ENCODE measurements at regions of chr1 and their contacts with region 1.

Region 1: DNA sequence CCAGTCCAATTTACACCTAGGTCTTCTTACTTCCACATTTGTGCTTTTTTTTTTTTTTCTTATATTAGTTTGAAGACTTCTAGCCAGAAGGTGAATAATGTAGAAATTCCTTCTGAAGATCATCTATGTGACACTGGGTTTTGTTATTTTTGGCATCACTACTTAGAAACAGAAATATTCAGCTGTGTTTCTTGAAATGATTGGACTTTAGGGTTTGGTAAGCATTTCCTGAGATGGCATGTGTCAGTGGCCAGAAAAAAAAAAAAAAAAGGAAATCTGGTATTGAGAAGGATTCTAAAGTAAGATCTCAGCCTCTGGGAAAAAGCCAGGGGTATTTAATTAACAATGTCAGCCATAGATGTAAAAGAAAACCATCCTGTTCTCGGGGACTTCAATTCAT is 43.4 kb upstream of the LRRC8C start:
- DNase-seq: no peak
- CTCF ChIP-seq: no peak

Region 2: DNA sequence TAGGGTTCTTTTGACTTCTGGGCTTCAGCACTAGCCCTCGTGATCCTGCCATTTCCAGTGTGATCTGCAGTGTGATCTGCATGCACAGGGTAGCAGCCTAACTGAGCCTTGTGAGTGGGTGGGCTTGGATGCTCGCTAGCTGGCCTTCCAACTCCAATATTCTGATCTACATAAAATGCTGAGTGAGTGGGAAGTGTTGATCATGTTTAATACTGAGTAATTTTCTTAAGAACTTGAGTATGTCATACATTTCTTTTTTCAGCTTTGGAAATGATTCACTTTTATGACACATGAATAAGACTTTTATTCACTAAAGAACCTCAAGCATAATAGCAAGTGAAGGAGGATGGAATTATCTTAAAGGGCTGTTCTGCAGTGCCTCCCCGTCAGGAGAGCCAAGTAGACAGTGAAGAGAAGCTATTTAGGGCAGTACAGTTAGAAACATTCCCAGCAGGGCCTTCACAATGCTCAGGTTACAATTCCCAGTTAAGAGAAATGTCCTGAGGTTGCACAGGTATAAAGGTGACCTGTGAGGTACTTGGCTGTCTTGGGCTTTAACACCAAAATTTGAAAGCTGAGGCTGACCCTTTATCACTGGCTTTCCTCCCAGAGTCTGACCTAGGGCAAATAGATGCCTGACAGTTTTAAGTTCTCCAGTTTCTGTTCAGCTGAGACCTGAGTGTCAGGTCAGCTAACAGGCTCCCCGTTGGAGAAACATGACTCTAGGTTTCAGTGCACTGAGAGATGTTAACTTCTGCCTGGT is 14.3 kb after region 1 on chr1:
- CTCF ChIA-PET with region 1: interaction called, 52 read pairs
- POLR2A ChIA-PET with region 1: interaction called, 3 read pairs
- DNase-seq: no peak
- CTCF ChIP-seq: no peak

Region 3: GRCh38 chr1:89660224-89661061 is 70.9 kb after region 1 on chr1:
- CTCF ChIA-PET with region 1: no interaction called
- POLR2A ChIA-PET with region 1: no interaction called
- DNase-seq: no peak
- CTCF ChIP-seq: no peak

Region 4: DNA sequence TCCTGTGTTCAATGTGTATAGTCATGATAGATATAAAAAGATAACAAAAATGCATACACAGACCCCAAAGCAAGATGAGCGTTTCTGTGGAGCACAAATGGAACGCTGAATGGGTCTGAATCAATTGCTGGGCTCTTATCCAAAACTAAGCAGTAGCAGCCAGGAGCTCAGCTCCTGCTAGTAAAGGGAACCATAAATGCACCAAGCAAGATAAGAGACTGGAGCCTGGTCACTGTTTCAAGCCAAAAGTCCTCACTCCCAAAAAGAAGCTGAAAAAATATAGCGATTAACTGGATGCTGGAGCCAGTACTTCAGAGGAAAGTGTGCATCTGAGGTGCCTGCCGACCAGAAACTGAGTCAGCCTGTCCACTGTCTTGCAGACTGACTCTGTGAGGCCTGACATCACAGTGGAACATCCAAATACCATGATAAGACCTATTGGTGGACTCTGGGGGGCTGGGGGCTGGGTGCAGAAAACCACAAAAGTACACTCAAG is 112.3 kb after region 1 on chr1:
- CTCF ChIA-PET with region 1: no interaction called
- POLR2A ChIA-PET with region 1: no interaction called
- DNase-seq: no peak
- CTCF ChIP-seq: no peak